Sigmoid colon (tissue), 7 donors: ENCODE measurements at regions of chr14 and their contacts with region 1.

Region 1: DNA sequence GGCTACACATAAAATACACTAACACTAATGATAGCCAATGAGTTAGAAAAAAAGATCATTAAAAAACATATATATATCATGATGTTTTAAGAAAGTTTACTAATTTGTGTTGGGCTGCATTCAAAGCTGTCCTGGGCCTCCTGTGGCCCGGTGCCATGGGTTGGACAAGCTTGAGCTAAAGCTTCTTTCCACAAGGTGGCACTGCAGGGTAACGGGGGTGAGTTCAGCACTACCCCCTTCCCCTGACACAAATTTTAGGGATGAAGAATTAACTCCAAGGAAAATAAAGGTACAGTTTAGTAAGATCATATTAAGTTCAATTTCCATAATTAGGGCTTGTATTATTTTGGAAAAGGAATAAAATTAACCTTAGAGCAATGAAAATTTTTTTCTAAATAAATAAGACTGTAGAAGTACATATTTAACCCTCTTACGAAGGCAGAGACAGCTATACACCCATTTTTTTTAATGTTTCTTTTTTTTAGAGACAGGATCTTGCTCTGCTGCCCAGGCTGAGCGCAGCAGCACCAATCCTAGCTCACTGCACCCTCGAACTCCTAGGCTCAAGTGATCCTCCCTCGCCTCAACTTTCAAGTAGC is 38.9 kb downstream of the PPP1R13B start:
- DNase-seq: peak; percentile 87
- H3K4me3 ChIP-seq: no peak overlapping the region
- H3K27ac ChIP-seq: no peak overlapping the region
- H3K4me1 ChIP-seq: peaks cover 0 to 12% (median 3%) of the 10 kb centered on the region in 4 donors
- H3K27me3 ChIP-seq: no peaks in the 10 kb centered on the region
- CTCF ChIP-seq: peak; percentile 60 to 85 (median 68)
- EP300 ChIP-seq: no peak
- POLR2A ChIP-seq: no peak

Region 2: DNA sequence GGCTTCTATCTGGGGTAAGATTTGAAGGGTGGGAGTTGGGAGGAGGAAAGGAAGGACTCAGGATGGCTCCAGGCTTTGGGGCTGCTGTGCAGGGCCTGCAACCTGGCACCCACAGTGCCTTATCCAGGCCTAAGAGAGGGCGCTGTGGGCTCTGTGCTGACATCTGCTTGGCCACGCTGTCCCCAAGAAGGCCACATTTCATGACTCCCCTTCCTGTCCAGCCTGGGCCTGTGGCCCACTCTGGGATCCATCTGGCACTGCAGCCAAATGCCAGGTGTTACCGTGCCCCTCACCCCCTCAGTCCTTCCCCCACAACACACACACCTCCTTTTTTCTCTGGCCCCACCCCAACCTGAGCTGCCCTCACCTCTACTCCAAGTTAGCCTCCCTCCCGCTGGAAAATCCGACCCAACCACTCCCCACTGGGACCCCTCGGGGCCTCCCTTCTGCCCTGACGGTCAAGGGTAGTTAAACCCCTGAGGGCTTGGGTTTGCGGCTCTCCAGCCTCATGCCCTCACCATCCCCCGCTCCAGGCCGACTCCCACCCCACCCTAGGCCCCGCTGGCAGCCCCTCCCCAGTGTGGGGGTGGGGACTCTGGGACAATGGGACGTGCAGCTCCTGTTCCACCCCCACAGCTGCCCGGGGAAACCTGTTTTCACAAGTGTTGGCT is 46.7 kb after region 1 on chr14:
- intact Hi-C with region 1: no loop called
- DNase-seq: no peak
- H3K4me3 ChIP-seq: no peak overlapping the region
- H3K27ac ChIP-seq: peak overlapping the region in 1 of 4 donors; percentile 23
- H3K4me1 ChIP-seq: no peaks in the 10 kb centered on the region
- H3K27me3 ChIP-seq: no peaks in the 10 kb centered on the region
- CTCF ChIP-seq: no peak
- EP300 ChIP-seq: no peak
- POLR2A ChIP-seq: no peak

Region 3: GRCh38 chr14:103910262-103910935 is 101.9 kb after region 1 on chr14:
- intact Hi-C with region 1: loop called (anchors 1 kb)
- DNase-seq: peak; percentile 89
- H3K4me3 ChIP-seq: peak overlapping the region in 1 of 4 donors; percentile 3
- H3K27ac ChIP-seq: peak overlapping the region; percentile 24 to 71 (median 36)
- H3K4me1 ChIP-seq: peaks cover 0 to 16% (median 8%) of the 10 kb centered on the region in 4 donors
- H3K27me3 ChIP-seq: no peaks in the 10 kb centered on the region
- CTCF ChIP-seq: peak; percentile 51 to 86 (median 70)
- EP300 ChIP-seq: no peak
- POLR2A ChIP-seq: no peak

Region 4: DNA sequence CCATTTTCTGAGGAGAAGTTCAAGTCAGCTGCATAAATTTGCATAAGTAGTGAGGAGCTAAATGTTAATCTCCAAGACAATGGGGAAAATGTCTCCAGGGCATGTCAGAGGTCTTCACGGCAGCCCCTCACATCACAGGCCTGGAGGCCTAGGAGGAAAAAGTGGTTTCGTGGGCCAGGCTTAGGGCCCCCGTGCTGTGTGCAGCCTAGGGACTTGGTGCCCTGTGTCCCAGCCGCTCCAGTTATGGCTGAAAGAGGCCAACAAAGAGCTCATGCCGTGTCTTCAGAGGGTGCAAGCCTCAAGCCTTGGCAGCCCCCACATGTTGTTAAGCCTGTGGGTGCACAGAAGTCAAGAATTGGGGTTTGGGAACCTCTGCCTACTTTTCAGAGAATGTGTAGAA is 175.7 kb after region 1 on chr14:
- intact Hi-C with region 1: loop called (anchors 1 kb)
- DNase-seq: no peak
- H3K4me3 ChIP-seq: no peak overlapping the region
- H3K27ac ChIP-seq: no peak overlapping the region
- H3K4me1 ChIP-seq: no peaks in the 10 kb centered on the region
- H3K27me3 ChIP-seq: no peaks in the 10 kb centered on the region
- CTCF ChIP-seq: no peak
- EP300 ChIP-seq: no peak
- POLR2A ChIP-seq: no peak

Region 5: DNA sequence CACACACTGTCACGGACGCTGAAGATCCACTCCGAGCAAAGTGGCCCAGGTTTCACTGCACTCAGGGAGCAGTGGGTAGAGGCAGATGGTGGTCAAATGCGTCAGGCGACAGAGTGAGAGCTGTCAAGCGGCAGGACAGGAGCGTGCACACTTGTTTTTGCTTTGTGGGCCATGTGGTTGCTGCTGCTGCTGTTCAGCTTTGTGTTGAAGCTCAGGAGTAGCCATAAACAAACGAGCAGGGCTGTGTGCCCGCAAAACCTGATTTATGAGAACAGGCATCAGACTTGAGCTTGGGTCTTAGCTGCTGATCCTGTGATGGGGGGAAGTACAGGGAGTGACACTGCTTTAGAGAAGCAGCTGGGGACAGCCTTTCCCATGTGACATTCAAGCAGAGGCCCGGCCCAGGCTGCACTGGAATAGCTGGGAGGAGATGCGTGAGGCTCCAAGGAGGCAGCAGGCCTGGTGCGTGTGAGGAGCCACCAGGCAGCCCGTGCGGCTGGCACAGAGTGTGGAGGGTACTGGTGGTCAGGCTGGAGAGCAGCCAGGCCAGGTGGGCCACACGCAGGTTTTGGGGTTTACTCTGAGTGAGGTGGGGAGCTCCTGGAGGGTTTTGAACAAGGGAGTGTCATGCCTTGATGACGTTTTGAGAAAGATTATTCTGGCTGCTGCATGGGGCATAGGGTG is 245.9 kb after region 1 on chr14:
- intact Hi-C with region 1: no loop called
- DNase-seq: no peak
- H3K4me3 ChIP-seq: no peak overlapping the region
- H3K27ac ChIP-seq: no peak overlapping the region
- H3K4me1 ChIP-seq: no peaks in the 10 kb centered on the region
- H3K27me3 ChIP-seq: no peaks in the 10 kb centered on the region
- CTCF ChIP-seq: no peak
- EP300 ChIP-seq: no peak
- POLR2A ChIP-seq: no peak

Region 6: DNA sequence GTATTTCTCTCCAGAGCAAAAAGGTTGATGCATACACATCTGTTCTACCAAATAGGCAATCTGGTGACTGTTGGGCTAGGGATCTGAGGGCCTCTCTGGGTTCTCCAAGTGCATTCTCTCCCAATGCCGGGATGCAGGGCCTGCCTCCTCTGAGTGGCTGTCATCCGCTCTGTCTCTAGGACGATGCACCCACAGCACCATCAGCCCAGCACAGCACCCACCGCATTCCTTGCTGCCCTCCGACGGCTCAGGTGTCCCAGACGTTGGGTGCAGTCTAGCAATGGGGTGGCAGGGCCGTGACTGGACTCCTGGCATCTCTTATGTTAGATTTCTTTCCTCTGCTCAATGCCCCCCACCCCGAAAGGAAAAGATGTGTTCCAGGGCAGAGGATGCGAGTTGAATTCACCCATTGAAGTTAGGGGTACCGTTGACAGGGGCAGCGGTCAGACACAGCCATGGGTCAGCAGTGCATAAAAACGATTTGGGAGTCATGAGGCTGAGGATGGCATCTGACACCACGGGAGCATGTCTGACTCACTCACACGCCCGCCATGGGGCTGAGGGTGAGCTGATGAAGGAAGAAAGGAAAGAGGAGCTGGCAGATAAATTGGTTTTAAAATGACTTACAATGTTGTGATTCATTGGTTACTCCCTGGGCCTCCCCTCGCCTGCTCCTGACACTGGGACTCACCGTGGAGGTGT is 677.9 kb after region 1 on chr14:
- intact Hi-C with region 1: no loop called
- DNase-seq: no peak
- H3K4me3 ChIP-seq: no peak overlapping the region
- H3K27ac ChIP-seq: no peak overlapping the region
- H3K4me1 ChIP-seq: no peaks in the 10 kb centered on the region
- H3K27me3 ChIP-seq: peaks cover 0 to 7% (median 0%) of the 10 kb centered on the region in 3 donors
- CTCF ChIP-seq: no peak
- EP300 ChIP-seq: no peak
- POLR2A ChIP-seq: no peak